Breast epithelium (tissue), 4 donors: ENCODE measurements at regions of chr5 and their contacts with region 1.

Region 1: DNA sequence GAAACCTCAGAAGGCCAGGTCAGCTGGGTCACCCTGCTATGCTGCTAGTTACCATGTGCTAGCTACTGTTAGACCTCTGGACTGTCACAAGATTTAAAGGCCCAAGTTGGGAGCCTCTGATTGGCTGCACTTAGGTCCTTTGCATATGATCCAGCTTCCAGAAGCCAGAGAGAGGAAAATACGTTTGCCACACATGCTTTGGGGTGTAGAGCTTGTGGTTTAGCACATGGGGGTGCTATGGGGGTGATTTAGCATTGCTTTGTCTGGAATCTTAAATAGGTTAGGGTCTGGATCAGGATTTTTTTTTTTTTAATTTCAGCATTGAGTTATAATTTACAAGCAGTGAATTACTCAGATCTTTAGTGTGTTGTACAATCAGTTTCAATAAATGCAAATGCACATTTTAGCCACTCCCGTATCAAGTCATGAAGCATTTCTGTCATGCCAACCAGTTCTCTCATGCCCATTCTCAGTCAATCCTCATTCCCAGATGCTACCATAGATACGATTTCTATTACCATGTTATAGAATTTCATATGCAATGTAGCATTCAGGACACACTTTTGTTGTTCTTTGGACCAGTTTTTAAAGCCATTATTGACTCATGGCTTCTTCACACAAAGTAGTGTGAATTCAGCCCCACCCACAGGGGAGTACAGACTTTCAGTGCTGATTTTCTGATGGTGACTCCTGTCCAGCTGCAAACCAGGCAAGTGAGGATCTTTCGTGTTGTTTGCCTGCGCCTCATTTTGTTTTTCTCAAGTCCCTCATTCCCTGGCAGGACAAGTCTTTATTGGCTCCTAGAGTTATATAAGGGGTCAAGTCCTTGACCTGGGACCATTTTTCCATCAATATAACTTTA is 250.4 kb downstream of the LRRC70 start:
- DNase-seq: no peak
- H3K4me3 ChIP-seq: no peak overlapping the region
- H3K27ac ChIP-seq: no peak overlapping the region
- H3K4me1 ChIP-seq: no peaks in the 10 kb centered on the region
- H3K27me3 ChIP-seq: no peaks in the 10 kb centered on the region
- CTCF ChIP-seq: no peak
- POLR2A ChIP-seq: no peak

Region 2: GRCh38 chr5:61044545-61044944 is 1784.4 kb before region 1 on chr5:
- intact Hi-C with region 1: no loop called
- DNase-seq: no peak
- H3K4me3 ChIP-seq: no peak overlapping the region
- H3K27ac ChIP-seq: no peak overlapping the region
- H3K4me1 ChIP-seq: no peaks in the 10 kb centered on the region
- H3K27me3 ChIP-seq: no peaks in the 10 kb centered on the region
- CTCF ChIP-seq: no peak
- POLR2A ChIP-seq: no peak

Region 3: GRCh38 chr5:62268234-62268633 is 560.7 kb before region 1 on chr5:
- intact Hi-C with region 1: no loop called
- DNase-seq: peak in 1 of 2 donors; percentile 20
- H3K4me3 ChIP-seq: no peak overlapping the region
- H3K27ac ChIP-seq: no peak overlapping the region
- H3K4me1 ChIP-seq: no peaks in the 10 kb centered on the region
- H3K27me3 ChIP-seq: no peaks in the 10 kb centered on the region
- CTCF ChIP-seq: no peak
- POLR2A ChIP-seq: no peak

Region 4: DNA sequence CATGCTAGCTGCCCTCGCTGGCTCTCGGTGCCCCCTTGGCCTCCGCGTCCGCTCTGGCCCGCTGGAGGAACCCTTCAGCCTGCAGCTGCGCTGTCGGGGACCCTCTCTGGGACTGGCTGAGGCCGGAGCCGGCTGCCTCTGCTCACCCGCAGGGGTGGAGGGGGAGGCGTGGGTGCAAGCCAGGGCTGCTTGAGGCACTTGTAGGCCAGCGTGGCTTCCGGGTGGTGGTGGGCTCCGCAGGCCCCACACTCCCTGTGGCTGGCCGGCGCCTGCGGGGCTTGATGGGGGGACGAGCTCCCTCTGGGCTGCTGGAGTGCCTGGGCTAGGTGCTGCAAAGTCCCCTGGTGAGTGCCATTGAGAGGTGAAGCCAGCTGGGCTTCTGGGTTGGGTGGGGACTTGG is 179.2 kb after region 1 on chr5:
- intact Hi-C with region 1: loop called (anchors 5 kb)
- DNase-seq: no peak
- H3K4me3 ChIP-seq: no peak overlapping the region
- H3K27ac ChIP-seq: no peak overlapping the region
- H3K4me1 ChIP-seq: no peaks in the 10 kb centered on the region
- H3K27me3 ChIP-seq: no peaks in the 10 kb centered on the region
- CTCF ChIP-seq: no peak
- POLR2A ChIP-seq: no peak